ENCODE measurements at regions of chr1 and their contacts with region 1.

Region 1: GRCh38 chr1:108668777-108669176 is 7.9 kb upstream of the HENMT1 start:
- DNase-seq: no peak
- ATAC-seq: no peak
- H3K4me3 ChIP-seq: no peak overlapping the region
- H3K27ac ChIP-seq: no peak overlapping the region
- H3K4me1 ChIP-seq: no peaks in the 10 kb centered on the region
- H3K27me3 ChIP-seq: no peaks in the 10 kb centered on the region
- CTCF ChIP-seq: no peak

Region 2: GRCh38 chr1:108575375-108575774 is 93.4 kb before region 1 on chr1:
- CTCF ChIA-PET with region 1: no interaction called
- POLR2A ChIA-PET with region 1: no interaction called
- in situ Hi-C with region 1: no loop called
- intact Hi-C with region 1: no loop called
- DNase-seq: no peak
- ATAC-seq: no peak
- H3K4me3 ChIP-seq: no peak overlapping the region
- H3K27ac ChIP-seq: no peak overlapping the region
- H3K4me1 ChIP-seq: no peaks in the 10 kb centered on the region
- H3K27me3 ChIP-seq: no peaks in the 10 kb centered on the region
- CTCF ChIP-seq: no peak

Region 3: DNA sequence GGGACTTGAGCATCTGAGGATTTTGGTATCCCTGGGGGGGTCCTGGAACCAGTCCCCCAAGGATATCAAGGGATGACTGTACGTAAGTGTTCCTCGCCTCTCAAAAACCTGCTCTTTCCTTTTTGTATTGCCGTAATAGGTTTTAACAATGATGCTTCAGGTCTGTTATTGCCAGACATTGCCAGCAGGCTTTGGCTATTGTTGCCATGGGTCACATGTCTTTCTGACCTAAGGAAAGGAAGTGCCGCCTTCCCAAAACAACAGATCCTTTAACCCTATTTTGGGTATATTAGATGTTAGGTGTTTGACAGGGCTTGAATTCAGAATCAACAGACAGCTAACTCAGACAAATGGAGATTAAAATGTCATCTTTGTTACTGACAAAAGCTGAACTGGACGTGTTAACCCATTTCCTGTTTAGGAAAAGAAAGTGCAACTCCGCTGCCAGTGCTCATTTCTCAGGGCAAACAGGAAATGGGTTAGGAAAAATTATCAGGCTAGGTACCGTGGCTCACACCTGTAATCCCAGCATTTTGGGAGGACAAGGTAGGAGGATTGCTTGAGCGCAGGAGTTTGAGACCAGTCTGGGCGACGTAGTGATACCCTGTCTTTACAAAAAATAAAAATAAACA is 10.9 kb after region 1 on chr1:
- CTCF ChIA-PET with region 1: no interaction called
- POLR2A ChIA-PET with region 1: interaction called, 36 read pairs
- in situ Hi-C with region 1: no loop called
- intact Hi-C with region 1: no loop called
- DNase-seq: no peak
- ATAC-seq: no peak
- H3K4me3 ChIP-seq: no peak overlapping the region
- H3K27ac ChIP-seq: no peak overlapping the region
- H3K4me1 ChIP-seq: no peaks in the 10 kb centered on the region
- H3K27me3 ChIP-seq: no peaks in the 10 kb centered on the region
- CTCF ChIP-seq: no peak

Measured in Panc1 (cell line).